Activated CD8-positive, alpha-beta T cell treated with anti-CD3 and anti-CD28 coated beads, Interleukin-2, amount 10 ng/mL, durations not matched to agents 7 days and 5 days (primary cell): ENCODE measurements at regions of chr3 and their contacts with region 1.

Region 1: GRCh38 chr3:183884427-183885296 is at the start of gene PARL:
- DNase-seq: peak; percentile 97
- ATAC-seq: peak; percentile 100
- H3K4me3 Mint-ChIP-seq: peak within 1 kb of the TSS; percentile 97
- H3K27ac Mint-ChIP-seq: peak within 1 kb of the TSS; percentile 94
- H3K4me1 Mint-ChIP-seq: peaks cover 28% of the 10 kb centered on the region
- H3K27me3 Mint-ChIP-seq: peaks cover under 1% of the 10 kb centered on the region
- total RNA-seq, gene PARL: 45.6 to 49.3 TPM

Region 2: GRCh38 chr3:183468424-183468823 is 416.2 kb before region 1 on chr3:
- CTCF ChIA-PET with region 1: interaction called, 12 read pairs
- POLR2A ChIA-PET with region 1: no interaction called
- DNase-seq: no peak
- ATAC-seq: no peak
- H3K4me3 Mint-ChIP-seq: no peak overlapping the region
- H3K27ac Mint-ChIP-seq: no peak overlapping the region
- H3K4me1 Mint-ChIP-seq: peaks cover 17% of the 10 kb centered on the region
- H3K27me3 Mint-ChIP-seq: peaks cover 3% of the 10 kb centered on the region

Region 3: DNA sequence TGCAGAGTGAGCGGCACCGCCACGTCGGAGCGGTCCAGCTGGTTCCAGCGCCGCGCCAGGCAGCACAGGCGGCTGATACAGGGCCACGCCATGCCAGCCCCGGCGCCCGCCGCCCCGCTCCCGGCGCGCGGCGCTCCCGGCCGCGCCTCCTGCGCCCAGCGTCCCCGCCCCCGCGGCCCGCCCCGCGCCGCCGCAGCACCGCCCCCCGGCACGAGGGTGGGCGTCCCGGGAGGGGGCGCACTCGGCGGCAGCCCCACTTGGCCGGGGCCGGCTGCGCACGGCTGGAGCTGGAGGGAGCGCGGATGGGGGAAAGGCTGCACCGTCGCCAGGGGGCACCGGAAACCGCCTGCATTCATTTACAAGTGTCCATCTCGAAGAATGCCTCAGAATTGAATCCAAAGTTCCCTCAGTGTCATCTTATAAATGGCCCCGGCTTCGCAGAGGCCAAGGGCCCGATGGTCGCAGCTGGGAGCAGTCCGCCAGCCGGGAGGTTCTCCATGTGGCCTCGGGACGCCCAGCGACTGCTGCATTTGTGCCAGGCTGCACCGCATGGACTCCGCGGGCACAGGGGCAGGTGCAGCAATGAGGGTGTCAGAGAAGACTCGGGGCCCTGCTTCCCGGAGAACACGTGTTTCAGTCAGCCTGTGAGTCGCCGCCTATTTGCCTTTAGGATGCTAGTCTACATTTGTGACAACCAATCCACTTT is 59.1 kb before region 1 on chr3 and contains the start of gene MAP6D1:
- CTCF ChIA-PET with region 1: interaction called, 28 read pairs
- POLR2A ChIA-PET with region 1: interaction called, 7 read pairs
- DNase-seq: peak; percentile 61
- ATAC-seq: peak; percentile 75
- H3K4me3 Mint-ChIP-seq: peak within 1 kb of the TSS; percentile 70
- H3K27ac Mint-ChIP-seq: peak within 1 kb of the TSS; percentile 2
- H3K4me1 Mint-ChIP-seq: peaks cover 10% of the 10 kb centered on the region
- H3K27me3 Mint-ChIP-seq: peaks cover 3% of the 10 kb centered on the region
- total RNA-seq, gene MAP6D1: 0.90 to 0.91 TPM

Region 4: GRCh38 chr3:183868796-183869195 is 15.9 kb before region 1 on chr3:
- CTCF ChIA-PET with region 1: interaction called, 23 read pairs
- POLR2A ChIA-PET with region 1: interaction called, 3 read pairs
- DNase-seq: no peak
- ATAC-seq: no peak
- H3K4me3 Mint-ChIP-seq: no peak overlapping the region
- H3K27ac Mint-ChIP-seq: no peak overlapping the region
- H3K4me1 Mint-ChIP-seq: peaks cover 14% of the 10 kb centered on the region
- H3K27me3 Mint-ChIP-seq: no peaks in the 10 kb centered on the region

Region 5: GRCh38 chr3:183895296-183895695 is 10.6 kb after region 1 on chr3:
- CTCF ChIA-PET with region 1: interaction called, 29 read pairs
- POLR2A ChIA-PET with region 1: interaction called, 3 read pairs
- DNase-seq: peak; percentile 56
- ATAC-seq: peak; percentile 62
- H3K4me3 Mint-ChIP-seq: no peak overlapping the region
- H3K27ac Mint-ChIP-seq: no peak overlapping the region
- H3K4me1 Mint-ChIP-seq: peaks cover 2% of the 10 kb centered on the region
- H3K27me3 Mint-ChIP-seq: peaks cover 7% of the 10 kb centered on the region

Region 6: GRCh38 chr3:184011937-184012889 is 127.6 kb after region 1 on chr3:
- CTCF ChIA-PET with region 1: no interaction called
- POLR2A ChIA-PET with region 1: no interaction called
- DNase-seq: no peak
- ATAC-seq: no peak
- H3K4me3 Mint-ChIP-seq: no peak overlapping the region
- H3K27ac Mint-ChIP-seq: no peak overlapping the region
- H3K4me1 Mint-ChIP-seq: peaks cover 15% of the 10 kb centered on the region
- H3K27me3 Mint-ChIP-seq: no peaks in the 10 kb centered on the region

Region 7: GRCh38 chr3:184620475-184621119 is 735.9 kb after region 1 on chr3:
- CTCF ChIA-PET with region 1: no interaction called
- POLR2A ChIA-PET with region 1: no interaction called
- DNase-seq: no peak
- ATAC-seq: no peak
- H3K4me3 Mint-ChIP-seq: no peak overlapping the region
- H3K27ac Mint-ChIP-seq: no peak overlapping the region
- H3K4me1 Mint-ChIP-seq: peaks cover 13% of the 10 kb centered on the region
- H3K27me3 Mint-ChIP-seq: peaks cover 13% of the 10 kb centered on the region